ENCODE measurements at regions of chr7 and their contacts with region 1.

Region 1: GRCh38 chr7:130912862-130913631 is 179.0 kb upstream of the KLF14 start:
- DNase-seq: peak; percentile 96 to 99 (median 98)
- H3K4me3 ChIP-seq: peak overlapping the region; percentile 65 to 95 (median 78)
- H3K4me3 Mint-ChIP-seq: peak overlapping the region; percentile 85 to 94
- H3K27ac ChIP-seq: peak overlapping the region; percentile 97 to 99
- H3K27ac Mint-ChIP-seq: peak overlapping the region; percentile 97 to 100 (median 98)
- H3K4me1 ChIP-seq: peaks cover 44 to 56% of the 10 kb centered on the region in 2 donors
- H3K4me1 Mint-ChIP-seq: peaks cover 84% of the 10 kb centered on the region
- H3K27me3 ChIP-seq: no peaks in the 10 kb centered on the region
- H3K27me3 Mint-ChIP-seq: peaks cover 0 to 2% (median 0%) of the 10 kb centered on the region in 3 donors
- CTCF ChIP-seq: no peak

Region 2: DNA sequence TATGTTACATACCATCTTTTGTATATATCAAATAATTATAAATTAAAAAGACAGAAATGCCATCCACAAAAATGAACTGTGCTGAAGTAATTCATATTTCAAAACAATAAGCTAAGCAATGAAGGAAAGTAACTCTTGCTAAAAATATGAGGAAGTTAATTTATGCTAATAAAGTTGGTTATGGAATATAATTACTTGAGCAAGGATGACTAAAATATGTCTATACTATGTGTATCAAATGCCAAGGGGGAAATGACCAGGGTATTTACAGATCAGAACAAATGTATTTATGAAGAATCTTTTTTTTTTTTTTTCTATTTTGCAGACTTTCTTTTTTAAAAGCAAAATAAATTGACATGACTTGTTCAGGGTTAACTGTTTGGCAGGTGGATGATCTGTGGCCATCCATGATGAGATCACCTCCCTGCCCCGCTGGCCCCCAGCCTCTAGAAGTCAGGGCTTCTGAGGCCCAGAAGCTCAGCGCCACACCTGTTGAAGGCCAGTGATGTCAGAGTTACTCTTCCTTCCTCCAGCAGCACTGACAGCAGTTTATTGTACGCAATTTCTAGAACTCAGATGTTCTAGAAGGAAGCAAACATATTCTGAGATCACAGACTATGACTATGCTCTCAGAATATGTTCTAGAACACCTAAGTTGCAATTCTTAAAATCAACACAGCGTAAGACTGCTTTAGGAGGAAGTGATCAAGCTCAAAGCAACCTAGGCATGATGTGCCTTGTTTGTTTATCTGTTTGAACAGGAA is 17.0 kb after region 1 on chr7:
- intact Hi-C with region 1: loop called in 1 of 2 experiments (anchors 2 kb)
- DNase-seq: peak; percentile 68 to 73 (median 70)
- H3K4me3 ChIP-seq: no peak overlapping the region
- H3K4me3 Mint-ChIP-seq: peak overlapping the region in 1 of 2 donors; percentile 20
- H3K27ac ChIP-seq: peak overlapping the region; percentile 71 to 90
- H3K27ac Mint-ChIP-seq: peak overlapping the region; percentile 79 to 98 (median 93)
- H3K4me1 ChIP-seq: peaks cover 35 to 49% of the 10 kb centered on the region in 2 donors
- H3K4me1 Mint-ChIP-seq: peaks cover 55% of the 10 kb centered on the region
- H3K27me3 ChIP-seq: no peaks in the 10 kb centered on the region
- H3K27me3 Mint-ChIP-seq: peaks cover 0 to 4% (median 0%) of the 10 kb centered on the region in 3 donors
- CTCF ChIP-seq: no peak

Region 3: DNA sequence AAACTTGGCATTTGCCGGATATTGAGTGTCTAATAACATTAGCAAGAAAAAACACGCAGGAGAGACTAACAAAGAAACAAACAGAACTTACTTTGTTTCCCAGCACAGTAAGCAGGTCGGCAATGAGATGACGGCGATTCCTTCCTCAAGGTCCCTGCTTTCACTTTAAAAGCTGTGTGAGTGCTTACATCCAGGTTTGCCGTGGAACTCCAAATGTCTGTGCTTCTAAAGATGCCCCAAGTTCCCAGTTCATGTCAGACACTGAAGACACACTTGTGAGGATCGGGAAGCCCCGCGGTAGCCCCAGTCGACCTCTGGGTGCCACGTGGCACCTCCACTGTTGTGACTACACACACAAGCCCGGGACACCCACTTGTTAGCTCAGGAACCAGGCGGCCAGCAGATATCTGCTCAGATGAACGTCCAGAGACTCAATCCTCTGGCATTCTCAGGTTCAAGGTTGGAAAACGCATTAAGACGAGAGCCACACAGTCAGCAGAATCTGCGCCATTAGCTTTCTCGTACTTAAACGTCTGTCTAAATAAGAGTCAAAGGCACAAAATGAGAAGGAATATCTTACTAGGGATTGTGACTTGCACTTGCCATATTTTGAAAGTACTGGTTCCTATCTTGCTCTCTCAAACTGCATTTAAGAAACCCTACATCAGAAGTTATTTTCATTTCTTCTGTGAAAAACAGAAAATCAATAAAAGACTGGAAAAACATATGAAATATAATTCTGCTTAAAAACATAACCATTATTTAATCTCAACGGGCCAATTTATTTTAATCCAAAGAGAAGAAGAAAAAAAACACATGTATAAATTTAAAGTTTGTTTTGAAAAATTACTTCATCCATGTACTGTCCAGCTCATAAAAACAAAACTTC is 28.5 kb after region 1 on chr7:
- intact Hi-C with region 1: loop called in 1 of 2 experiments (anchors 1 kb)
- DNase-seq: peak in 2 of 3 donors; percentile 42 to 78
- H3K4me3 ChIP-seq: peak overlapping the region; percentile 25 to 69 (median 52)
- H3K4me3 Mint-ChIP-seq: peak overlapping the region; percentile 84 to 85
- H3K27ac ChIP-seq: peak overlapping the region; percentile 33 to 94
- H3K27ac Mint-ChIP-seq: peak overlapping the region; percentile 75 to 95 (median 90)
- H3K4me1 ChIP-seq: peaks cover 5 to 19% of the 10 kb centered on the region in 2 donors
- H3K4me1 Mint-ChIP-seq: peaks cover 35% of the 10 kb centered on the region
- H3K27me3 ChIP-seq: no peaks in the 10 kb centered on the region
- H3K27me3 Mint-ChIP-seq: peaks cover 0 to 2% (median 0%) of the 10 kb centered on the region in 3 donors
- CTCF ChIP-seq: no peak

Region 4: DNA sequence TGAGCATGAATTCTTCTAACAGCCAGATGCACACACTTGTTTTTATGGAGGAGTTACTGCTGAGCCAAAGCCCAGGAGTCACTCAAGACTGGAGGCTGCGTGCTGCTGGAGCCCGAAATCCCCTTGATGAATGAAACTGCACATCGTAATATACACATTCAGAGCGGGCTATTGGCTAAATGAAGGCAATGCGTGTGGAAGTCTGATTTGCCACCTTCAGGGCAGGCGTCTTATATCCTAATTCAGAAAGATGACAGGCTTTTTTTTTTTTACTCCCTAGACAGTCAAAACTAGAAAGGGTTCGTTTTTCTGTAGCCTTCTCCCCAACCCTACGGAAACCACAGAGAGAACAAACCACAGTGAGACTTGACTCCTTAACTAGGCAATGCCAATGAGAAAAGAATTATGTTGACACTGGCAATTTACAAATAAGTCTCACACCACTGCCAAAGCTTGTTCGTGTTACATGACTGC is 48.1 kb after region 1 on chr7:
- intact Hi-C with region 1: loop called (anchors 2 to 5 kb)
- DNase-seq: peak; percentile 48 to 92 (median 85)
- H3K4me3 ChIP-seq: peak overlapping the region in 2 of 3 experiments; percentile 40 to 46
- H3K4me3 Mint-ChIP-seq: peak overlapping the region; percentile 79 to 80
- H3K27ac ChIP-seq: peak overlapping the region; percentile 72 to 95
- H3K27ac Mint-ChIP-seq: peak overlapping the region; percentile 95 to 99 (median 97)
- H3K4me1 ChIP-seq: peaks cover 48 to 74% of the 10 kb centered on the region in 2 donors
- H3K4me1 Mint-ChIP-seq: peaks cover 71% of the 10 kb centered on the region
- H3K27me3 ChIP-seq: no peaks in the 10 kb centered on the region
- H3K27me3 Mint-ChIP-seq: peaks cover 0 to 1% (median 0%) of the 10 kb centered on the region in 3 donors
- CTCF ChIP-seq: no peak

Region 5: GRCh38 chr7:131040467-131040932 is 127.5 kb after region 1 on chr7:
- intact Hi-C with region 1: no loop called
- DNase-seq: peak; percentile 42 to 58 (median 54)
- H3K4me3 ChIP-seq: no peak overlapping the region
- H3K4me3 Mint-ChIP-seq: peak overlapping the region in 1 of 2 donors; percentile 64
- H3K27ac ChIP-seq: no peak overlapping the region
- H3K27ac Mint-ChIP-seq: no peak overlapping the region
- H3K4me1 ChIP-seq: peaks cover 0 to 9% of the 10 kb centered on the region in 2 donors
- H3K4me1 Mint-ChIP-seq: peaks cover 17% of the 10 kb centered on the region
- H3K27me3 ChIP-seq: no peaks in the 10 kb centered on the region
- H3K27me3 Mint-ChIP-seq: no peaks in the 10 kb centered on the region
- CTCF ChIP-seq: peak; percentile 90

Measured in CD14-positive monocyte (primary cell).